ENCODE measurements at regions of chr13 and their contacts with region 1.

Region 1: DNA sequence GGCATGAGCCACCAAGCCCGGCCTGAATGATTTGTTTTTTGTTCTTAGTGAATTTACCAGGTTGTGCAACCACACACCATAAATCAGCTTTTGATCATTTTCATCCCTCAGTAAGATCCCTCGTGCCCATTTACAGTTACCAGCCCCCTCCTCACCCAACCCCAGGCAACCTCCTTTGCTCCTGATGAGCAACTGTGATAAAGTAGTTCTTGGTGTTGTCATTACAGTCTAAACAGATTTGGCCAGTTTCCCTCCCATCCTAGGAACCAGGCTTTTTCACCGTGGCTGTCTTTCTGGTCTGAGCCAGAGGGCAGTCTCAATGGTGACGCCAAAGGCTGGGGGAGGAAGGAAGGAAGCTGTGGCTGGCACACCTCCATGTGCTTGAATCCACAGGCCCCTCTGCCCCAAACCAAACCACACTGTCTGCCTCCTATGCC is 61.2 kb upstream of the WDFY2 start:
- DNase-seq: peak; percentile 53
- ATAC-seq: peak; percentile 19
- H3K4me3 ChIP-seq: no peak overlapping the region
- H3K27ac ChIP-seq: peak overlapping the region; percentile 73
- H3K4me1 ChIP-seq: peaks cover 84% of the 10 kb centered on the region
- H3K27me3 ChIP-seq: no peaks in the 10 kb centered on the region
- CTCF ChIP-seq: no peak
- EP300 ChIP-seq: no peak
- POLR2A ChIP-seq: no peak
- RAD21 ChIP-seq: no peak

Region 2: GRCh38 chr13:51342706-51343105 is 180.4 kb before region 1 on chr13:
- CTCF ChIA-PET with region 1: no interaction called
- POLR2A ChIA-PET with region 1: no interaction called
- in situ Hi-C with region 1: no loop called
- intact Hi-C with region 1: no loop called
- DNase-seq: no peak
- ATAC-seq: no peak
- H3K4me3 ChIP-seq: no peak overlapping the region
- H3K27ac ChIP-seq: no peak overlapping the region
- H3K4me1 ChIP-seq: peaks cover 8% of the 10 kb centered on the region; the same call in 1 of the 2 replicates
- H3K27me3 ChIP-seq: no peaks in the 10 kb centered on the region
- CTCF ChIP-seq: no peak
- EP300 ChIP-seq: no peak
- POLR2A ChIP-seq: no peak
- RAD21 ChIP-seq: no peak

Region 3: GRCh38 chr13:51465124-51465523 is 58.0 kb before region 1 on chr13:
- CTCF ChIA-PET with region 1: no interaction called
- POLR2A ChIA-PET with region 1: no interaction called
- in situ Hi-C with region 1: no loop called
- intact Hi-C with region 1: loop called (anchors 5 kb)
- DNase-seq: peak; percentile 41
- ATAC-seq: peak; percentile 66
- H3K4me3 ChIP-seq: no peak overlapping the region
- H3K27ac ChIP-seq: no peak overlapping the region
- H3K4me1 ChIP-seq: peaks cover 18% of the 10 kb centered on the region
- H3K27me3 ChIP-seq: no peaks in the 10 kb centered on the region; a peak in 1 of 5 replicates
- CTCF ChIP-seq: no peak
- EP300 ChIP-seq: no peak
- POLR2A ChIP-seq: no peak
- RAD21 ChIP-seq: no peak

Measured in HepG2 (cell line).